GM10248 (cell line): ENCODE measurements at regions of chr12 and their contacts with region 1.

Region 1: DNA sequence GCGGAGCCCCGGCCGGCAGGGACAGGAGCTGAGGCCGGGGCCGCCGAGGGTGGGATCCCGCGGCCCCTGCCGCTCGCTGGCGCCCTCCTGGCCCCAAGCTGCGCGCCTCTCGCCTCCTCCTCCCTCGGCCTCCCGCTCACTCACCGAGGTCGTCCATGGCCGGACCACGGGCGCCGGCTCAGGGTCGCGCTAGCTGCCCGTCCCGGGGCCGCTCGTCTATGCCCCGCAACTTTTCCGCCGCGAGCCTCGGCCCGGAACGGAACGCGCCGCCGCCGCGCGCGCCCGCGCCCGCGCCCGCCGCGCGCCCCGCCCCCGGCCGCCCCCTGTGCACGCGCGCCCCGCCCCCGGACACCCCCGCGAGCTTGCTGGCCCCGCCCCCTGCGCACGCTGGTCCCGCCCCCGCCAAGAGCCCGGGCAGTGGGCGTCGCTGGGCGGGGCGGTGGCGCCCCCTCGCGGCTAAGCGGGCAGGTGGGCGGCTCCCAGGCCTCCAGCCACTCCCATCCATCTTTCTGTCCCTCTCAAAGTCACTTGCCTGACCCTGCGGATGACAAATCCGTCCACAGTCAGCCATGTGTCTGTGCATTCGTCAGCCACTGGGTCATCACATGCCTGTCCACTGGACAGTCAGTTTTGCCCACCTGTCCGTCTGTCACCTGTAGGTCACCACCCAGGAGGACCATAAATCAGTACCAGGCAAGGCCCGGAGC is at the start of gene PXN:
- DNase-seq: peak; percentile 96
- CTCF ChIP-seq: peak; percentile 78

Region 2: DNA sequence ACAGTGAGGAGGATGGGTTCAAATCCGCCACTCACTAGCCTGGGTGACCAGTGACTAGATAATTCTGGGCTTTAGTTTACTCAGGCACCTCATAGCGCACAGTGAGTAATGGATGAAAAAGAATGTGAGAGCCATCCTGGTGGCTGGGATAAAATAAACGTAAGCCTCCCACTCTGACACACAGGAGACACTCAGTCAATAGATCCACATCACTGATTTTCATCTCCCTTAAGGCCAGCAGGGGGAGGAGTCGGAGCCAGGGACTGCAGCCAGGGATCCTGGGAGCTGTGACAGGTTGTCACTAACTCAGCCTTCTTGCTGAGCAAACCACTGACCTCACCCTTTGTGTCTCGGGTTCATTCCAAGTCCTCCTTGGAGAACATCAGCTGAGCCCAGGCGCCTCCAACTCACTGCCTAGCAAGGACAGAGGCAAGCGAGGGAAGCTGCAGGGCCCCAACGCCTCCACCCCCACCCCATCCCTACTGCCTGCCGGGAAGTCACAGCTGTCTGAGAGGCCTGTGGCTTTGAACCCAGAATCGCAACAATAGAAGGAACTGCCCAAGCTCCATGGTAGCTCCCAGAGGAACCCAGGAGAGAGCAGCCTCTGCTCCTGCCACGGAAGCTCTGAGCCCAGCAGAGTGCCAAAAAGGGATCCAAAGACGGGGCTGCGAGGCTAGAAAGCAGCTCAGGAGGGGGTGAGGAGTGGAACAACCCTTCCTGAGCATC is 30.8 kb before region 1 on chr12:
- CTCF ChIA-PET with region 1: interaction called, 375 read pairs
- POLR2A ChIA-PET with region 1: no interaction called
- DNase-seq: no peak
- CTCF ChIP-seq: peak; percentile 9

Region 3: DNA sequence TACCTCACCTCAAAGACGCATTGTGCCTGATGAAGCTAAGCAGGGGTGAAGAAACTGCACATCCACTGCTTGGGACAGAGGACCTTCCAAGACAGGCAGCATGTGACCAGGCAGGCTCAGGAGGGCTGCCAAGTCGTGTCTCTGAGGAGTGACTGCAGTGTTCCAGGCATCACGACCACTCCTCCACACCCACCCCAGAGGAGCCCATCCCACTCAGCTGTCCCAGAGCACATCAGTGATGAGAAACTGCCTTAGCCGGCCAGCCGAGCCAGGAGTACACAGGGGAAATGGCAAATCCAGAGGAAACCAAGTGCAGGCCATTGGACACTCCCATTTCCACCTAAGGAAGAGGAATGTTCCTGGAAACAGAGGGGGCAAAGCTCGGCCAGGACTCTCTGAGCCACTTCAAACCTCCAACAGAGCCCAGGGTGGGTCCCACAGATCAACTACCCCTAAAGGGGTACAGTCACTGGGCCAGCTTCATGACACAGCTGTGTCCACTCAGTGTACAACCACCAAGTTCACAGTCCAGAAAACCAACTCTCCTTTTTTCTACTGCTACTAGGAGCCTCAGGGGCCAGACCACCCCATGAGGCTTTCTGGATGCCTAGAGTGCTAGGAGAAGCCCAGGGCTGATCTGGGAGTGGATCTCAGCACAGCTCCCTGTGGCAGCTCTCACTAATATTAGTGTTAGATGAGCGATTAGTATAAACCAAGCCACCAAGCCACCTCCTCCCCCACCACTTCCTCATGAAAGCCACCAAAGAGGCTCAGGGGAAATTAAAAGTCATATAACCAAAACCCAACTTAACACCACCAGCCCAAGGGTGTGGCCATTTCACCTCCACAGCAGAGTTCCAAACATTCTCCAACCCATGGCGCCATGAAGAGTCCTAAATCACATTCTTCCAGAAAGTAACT is 15.5 kb before region 1 on chr12:
- CTCF ChIA-PET with region 1: interaction called, 46 read pairs
- POLR2A ChIA-PET with region 1: no interaction called
- DNase-seq: peak; percentile 54
- CTCF ChIP-seq: no peak

Region 4: DNA sequence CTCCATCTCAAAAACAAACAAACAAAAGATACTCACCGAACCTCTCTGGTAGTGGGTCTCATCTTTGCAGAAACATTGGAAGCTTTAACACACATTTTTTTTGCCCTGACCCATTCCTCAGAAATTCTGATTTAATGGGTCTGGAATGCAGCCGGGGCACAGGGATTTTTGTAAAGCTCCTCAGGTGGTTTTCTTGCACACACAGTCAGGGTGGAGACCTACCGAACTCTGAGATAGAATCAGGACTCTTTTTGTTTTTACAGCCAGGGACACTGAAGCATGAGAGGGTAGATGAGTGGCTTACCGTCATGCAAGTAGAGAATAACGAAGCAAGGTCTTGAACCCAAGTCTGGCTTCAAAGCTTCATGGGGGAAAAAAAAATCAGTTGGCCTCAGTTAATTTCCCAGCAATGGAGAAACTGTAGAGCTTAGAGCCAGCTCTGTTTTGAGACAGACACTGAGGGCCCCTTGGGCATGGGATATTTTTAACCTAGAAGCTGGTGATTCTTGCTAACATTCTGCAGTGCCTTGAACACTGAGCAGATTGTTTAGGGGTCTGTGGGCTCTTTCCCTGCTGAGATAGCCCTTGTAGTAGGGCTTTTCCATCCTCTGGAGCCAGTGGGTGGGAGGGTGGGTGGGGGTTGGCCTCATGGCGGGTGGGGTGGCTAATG is 21.3 kb after region 1 on chr12:
- CTCF ChIA-PET with region 1: interaction called, 32 read pairs
- POLR2A ChIA-PET with region 1: interaction called, 29 read pairs
- DNase-seq: no peak
- CTCF ChIP-seq: no peak

Region 5: GRCh38 chr12:120301962-120302815 is 36.6 kb after region 1 on chr12 and contains the start of gene SIRT4:
- CTCF ChIA-PET with region 1: interaction called, 12 read pairs
- POLR2A ChIA-PET with region 1: no interaction called
- DNase-seq: peak; percentile 93
- CTCF ChIP-seq: peak; percentile 72

Region 6: GRCh38 chr12:120352117-120352516 is 86.5 kb after region 1 on chr12:
- CTCF ChIA-PET with region 1: no interaction called
- POLR2A ChIA-PET with region 1: no interaction called
- DNase-seq: no peak
- CTCF ChIP-seq: no peak